Mammary epithelial cell (primary cell): ENCODE measurements at regions of chr4 and their contacts with region 1.

Region 1: DNA sequence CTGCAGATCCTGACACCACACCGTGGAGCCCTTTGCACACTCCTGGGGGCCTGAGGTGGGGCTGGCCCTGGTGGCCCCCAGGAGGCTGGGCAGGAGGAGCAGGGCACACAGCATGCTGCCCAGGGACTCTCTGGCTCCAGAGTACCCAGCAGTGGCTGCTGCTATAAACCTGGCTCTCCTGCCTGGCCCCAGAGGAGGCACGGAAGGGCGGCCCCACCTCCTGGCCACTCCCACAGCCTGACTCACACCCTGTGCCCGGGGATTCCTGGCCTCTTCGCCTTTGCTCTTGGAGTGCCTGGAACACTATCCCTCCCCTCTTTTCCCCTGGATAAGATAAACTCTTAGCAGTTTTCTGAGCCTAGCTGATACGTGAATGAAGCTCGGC is at the start of gene PSAPL1:
- DNase-seq: peak; percentile 60
- H3K4me3 ChIP-seq: no peak within 1 kb of the TSS
- H3K27ac ChIP-seq: no peak within 1 kb of the TSS
- H3K4me1 ChIP-seq: peaks cover 24% of the 10 kb centered on the region
- H3K27me3 ChIP-seq: no peaks in the 10 kb centered on the region
- CTCF ChIP-seq: no peak
- total RNA-seq, gene PSAPL1: under 0.01 TPM in 1 of 2 donors, not detected in the other

Region 2: DNA sequence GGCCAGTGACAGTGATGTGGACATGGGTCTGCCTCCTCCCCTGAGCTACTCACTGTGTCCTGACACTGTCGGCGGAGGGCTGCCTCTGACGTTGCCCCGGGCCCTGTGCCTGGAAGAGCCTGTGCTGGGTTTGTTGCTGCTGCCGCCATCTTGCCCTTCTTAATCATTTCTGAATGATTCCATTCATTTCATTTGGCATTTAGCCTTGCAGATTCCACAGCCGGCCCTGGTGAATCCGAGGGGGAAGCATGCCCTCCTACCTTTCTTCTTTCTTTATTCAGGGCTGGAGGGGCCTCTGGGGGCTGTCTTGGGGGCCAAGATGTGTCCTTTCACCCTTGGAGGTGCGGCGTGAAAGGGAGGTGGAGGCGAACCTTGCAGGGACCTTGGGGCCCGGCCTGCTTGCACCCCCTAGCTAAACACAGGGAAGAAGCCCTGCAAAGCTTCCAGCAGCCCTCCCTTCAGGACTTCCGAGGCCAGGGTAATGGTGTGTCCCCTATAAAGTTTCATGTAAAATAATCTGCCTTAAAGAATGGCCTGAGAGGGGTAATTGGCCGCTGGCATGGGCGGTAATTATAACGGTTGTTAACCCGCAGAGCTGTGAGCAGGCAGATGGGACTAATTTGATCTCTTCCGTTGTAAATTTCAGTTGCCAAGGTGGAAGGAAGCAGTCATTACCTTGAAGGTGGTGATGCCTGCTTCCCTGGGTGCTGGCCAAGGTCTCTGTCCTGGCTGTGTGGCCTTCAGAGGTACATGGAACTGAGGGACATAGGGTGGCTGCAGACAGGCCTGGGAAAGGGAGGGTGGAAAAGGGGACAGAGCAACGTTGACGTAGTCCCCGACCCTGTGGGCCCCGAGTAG is 92.3 kb before region 1 on chr4:
- CTCF ChIA-PET with region 1: no interaction called
- dilution Hi-C with region 1: loop called (anchors 5 kb)
- in situ Hi-C with region 1: no loop called
- intact Hi-C with region 1: no loop called
- DNase-seq: no peak
- H3K4me3 ChIP-seq: no peak overlapping the region
- H3K27ac ChIP-seq: no peak overlapping the region
- H3K4me1 ChIP-seq: no peaks in the 10 kb centered on the region
- H3K27me3 ChIP-seq: no peaks in the 10 kb centered on the region
- CTCF ChIP-seq: no peak

Region 3: DNA sequence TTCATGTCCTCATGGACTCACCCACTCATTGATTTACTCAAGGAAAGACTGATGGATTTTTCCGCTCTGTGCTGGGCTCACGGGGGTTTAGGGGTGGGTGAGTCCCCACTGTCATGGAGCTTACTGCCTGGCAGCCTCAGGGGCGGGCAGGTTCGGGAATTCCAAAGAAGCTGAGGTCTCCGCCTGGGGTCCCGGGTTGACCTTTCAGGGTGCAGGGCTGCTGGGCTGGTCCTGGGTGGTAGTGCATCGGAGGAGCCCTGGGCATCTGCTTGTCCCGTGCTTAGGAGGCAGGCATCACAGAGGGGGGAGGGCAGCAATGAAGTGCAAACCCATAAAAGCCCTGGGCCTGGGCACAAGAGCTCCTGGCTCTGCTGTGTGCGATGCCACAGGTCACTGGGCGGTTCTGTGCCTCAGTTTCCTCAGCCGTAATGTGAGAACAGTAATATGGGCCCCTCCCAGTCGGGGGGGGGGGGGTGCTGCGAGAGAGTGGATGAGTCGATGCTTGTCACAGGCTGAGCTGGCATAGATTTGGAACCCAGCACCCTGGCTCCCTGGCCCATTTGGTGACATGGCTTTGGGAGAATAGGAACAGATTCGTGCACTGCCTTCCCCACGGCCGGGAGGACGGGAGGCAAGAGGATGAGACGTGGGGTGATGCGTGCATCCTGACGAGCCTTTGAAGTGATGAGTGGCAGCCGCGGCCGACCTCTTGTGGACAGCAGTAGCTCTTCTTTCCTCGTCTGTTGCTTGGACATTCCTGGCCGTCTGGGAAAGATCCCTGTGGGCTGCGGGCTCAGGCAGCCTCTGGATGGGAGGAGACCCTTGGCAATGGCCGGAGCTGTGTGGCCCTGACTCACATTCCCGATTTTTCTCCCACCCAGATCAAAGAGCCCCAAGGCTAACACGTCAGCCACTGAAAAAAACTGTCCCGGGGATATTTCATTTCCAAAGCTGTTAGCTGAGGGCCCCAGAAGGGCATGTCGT is 42.0 kb before region 1 on chr4:
- CTCF ChIA-PET with region 1: no interaction called
- dilution Hi-C with region 1: loop called (anchors 5 kb)
- in situ Hi-C with region 1: no loop called
- intact Hi-C with region 1: loop called (anchors 2 kb)
- DNase-seq: no peak
- H3K4me3 ChIP-seq: no peak overlapping the region
- H3K27ac ChIP-seq: no peak overlapping the region
- H3K4me1 ChIP-seq: peaks cover 15% of the 10 kb centered on the region
- H3K27me3 ChIP-seq: peaks cover 2% of the 10 kb centered on the region
- CTCF ChIP-seq: no peak